Caco-2 (cell line): ENCODE measurements at regions of chr2 and their contacts with region 1.

Region 1: DNA sequence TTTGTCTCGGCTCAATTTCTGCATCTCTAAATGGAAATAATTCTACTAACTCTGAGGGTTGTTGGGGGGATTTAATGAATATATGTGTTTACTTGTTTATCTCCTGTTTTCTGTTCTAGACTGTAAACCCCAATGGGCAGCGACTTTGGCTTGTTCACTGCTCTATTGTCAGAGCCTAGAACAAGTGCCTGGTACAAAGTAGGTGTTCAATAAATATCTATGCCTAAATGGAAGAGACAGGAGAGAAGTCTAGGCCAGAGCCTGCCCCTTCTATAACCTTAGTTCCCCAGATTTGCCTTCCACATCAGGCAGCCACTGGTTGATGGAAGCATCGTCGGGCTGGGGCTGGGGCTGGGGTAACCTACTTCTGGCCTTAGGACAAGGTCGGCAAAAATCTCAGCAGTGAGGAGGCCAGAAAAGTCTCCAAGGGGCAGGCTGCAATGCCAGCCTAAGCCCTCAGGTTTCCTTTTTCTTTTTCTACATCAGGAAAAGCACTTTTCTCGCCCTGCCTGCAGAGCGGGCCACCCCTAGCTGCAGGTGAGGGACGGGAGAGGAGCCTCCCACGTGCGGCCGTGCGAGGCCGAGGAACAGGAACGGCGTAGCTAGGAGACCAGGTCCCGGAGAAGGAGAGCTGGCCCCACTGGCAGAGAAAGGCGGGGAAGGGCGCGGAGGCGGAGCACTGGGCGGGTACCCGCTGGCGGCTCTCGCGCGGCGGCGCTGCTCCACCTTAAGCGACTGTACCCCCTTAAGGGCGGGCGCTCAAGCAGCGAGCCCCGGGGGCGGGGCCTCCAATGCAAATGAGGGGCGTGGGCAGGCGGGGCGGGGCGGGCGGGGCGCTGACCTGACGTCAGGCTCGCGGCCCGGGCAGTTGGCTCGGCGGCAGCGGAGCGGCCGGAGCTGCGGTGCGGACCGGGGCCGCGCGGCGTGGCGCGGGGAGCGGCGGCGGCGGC is at the start of gene CNNM4:
- DNase-seq: peak; percentile 96
- H3K4me3 ChIP-seq: peak within 1 kb of the TSS; percentile 91
- H3K4me3 Mint-ChIP-seq: peak within 1 kb of the TSS; percentile 76
- H3K27ac Mint-ChIP-seq: peak within 1 kb of the TSS; percentile 77
- H3K4me1 ChIP-seq: peaks cover 33% of the 10 kb centered on the region
- H3K4me1 Mint-ChIP-seq: peaks cover 29% of the 10 kb centered on the region
- H3K27me3 ChIP-seq: no peaks in the 10 kb centered on the region
- H3K27me3 Mint-ChIP-seq: no peaks in the 10 kb centered on the region
- CTCF ChIP-seq: peak in 1 of 2 experiments; percentile 37
- total RNA-seq, gene CNNM4: 23.2 and 28.3 TPM in 2 replicates

Region 2: GRCh38 chr2:96638144-96639121 is 121.9 kb before region 1 on chr2 and contains the start of gene KANSL3:
- CTCF ChIA-PET with region 1: no interaction called
- POLR2A ChIA-PET with region 1: interaction called, 5 read pairs
- intact Hi-C with region 1: loop called (anchors 1 kb)
- DNase-seq: peak; percentile 88 to 96
- H3K4me3 ChIP-seq: peak within 1 kb of the TSS; percentile 69
- H3K4me3 Mint-ChIP-seq: peak within 1 kb of the TSS; percentile 81
- H3K27ac Mint-ChIP-seq: peak within 1 kb of the TSS; percentile 94
- H3K4me1 ChIP-seq: no peaks in the 10 kb centered on the region
- H3K4me1 Mint-ChIP-seq: peaks cover 12% of the 10 kb centered on the region
- H3K27me3 ChIP-seq: no peaks in the 10 kb centered on the region
- H3K27me3 Mint-ChIP-seq: no peaks in the 10 kb centered on the region
- CTCF ChIP-seq: no peak
- total RNA-seq, gene KANSL3: 47.4 and 48.6 TPM in 2 replicates

Region 3: DNA sequence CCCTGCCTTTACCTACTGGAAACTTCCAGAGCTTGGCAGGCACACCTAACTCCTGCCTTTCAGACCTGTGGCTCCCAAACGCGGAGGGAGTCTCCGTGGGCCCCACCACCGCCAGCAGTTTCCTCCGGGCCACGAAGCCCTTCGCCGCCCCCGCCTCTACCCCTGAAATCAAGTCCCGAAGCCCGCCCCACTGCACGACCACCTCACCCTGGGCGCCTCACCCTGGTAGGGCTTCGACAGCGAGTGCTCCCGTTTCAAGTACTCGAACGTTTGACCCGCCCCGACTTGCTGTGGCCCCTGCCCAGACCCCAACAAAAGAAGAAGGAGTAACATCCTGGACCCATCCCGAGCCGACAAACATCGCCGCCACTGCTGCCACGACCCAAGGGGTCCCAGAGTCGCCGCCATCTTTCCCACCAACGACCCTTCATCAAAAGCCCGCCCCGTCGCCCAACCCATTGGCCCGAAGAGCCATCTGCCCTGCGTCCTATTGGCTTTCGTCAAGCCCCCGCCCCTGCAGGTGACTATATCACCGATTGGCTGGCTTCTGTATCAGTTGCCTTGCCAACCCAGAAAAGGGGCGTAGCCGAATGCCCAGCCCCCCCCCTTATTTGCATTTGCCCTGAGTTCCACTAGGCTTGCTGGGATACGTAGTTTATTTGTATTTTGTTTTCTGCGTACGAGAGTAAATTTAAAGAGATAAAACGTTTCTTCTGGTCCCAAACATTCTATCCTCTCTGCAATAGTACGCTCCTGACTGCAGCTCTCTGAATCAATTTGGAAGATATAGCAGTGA is 20.5 kb before region 1 on chr2 and contains the start of gene LMAN2L:
- CTCF ChIA-PET with region 1: interaction called, 8 read pairs
- POLR2A ChIA-PET with region 1: interaction called, 3 read pairs
- intact Hi-C with region 1: loop called (anchors 1 kb)
- DNase-seq: peak; percentile 97 to 98
- H3K4me3 ChIP-seq: peak within 1 kb of the TSS; percentile 81
- H3K4me3 Mint-ChIP-seq: peak within 1 kb of the TSS; percentile 85
- H3K27ac Mint-ChIP-seq: peak within 1 kb of the TSS; percentile 99
- H3K4me1 ChIP-seq: peaks cover 6% of the 10 kb centered on the region
- H3K4me1 Mint-ChIP-seq: peaks cover 15% of the 10 kb centered on the region
- H3K27me3 ChIP-seq: no peaks in the 10 kb centered on the region
- H3K27me3 Mint-ChIP-seq: no peaks in the 10 kb centered on the region
- CTCF ChIP-seq: peak in 1 of 2 experiments; percentile 5
- total RNA-seq, gene LMAN2L: 27.4 and 30.2 TPM in 2 replicates

Region 4: GRCh38 chr2:96788442-96789244 is 28.3 kb after region 1 on chr2:
- CTCF ChIA-PET with region 1: interaction called, 8 read pairs
- POLR2A ChIA-PET with region 1: interaction called, 3 read pairs
- intact Hi-C with region 1: loop called (anchors 1 kb)
- DNase-seq: peak; percentile 47 to 77
- H3K4me3 ChIP-seq: no peak overlapping the region
- H3K4me3 Mint-ChIP-seq: peak overlapping the region; percentile 32
- H3K27ac Mint-ChIP-seq: peak overlapping the region; percentile 92
- H3K4me1 ChIP-seq: peaks cover 23% of the 10 kb centered on the region
- H3K4me1 Mint-ChIP-seq: peaks cover 14% of the 10 kb centered on the region
- H3K27me3 ChIP-seq: no peaks in the 10 kb centered on the region
- H3K27me3 Mint-ChIP-seq: no peaks in the 10 kb centered on the region
- CTCF ChIP-seq: peak in 1 of 2 experiments; percentile 3

Region 5: GRCh38 chr2:96816128-96816835 is 56.0 kb after region 1 on chr2 and contains the start of gene CNNM3:
- CTCF ChIA-PET with region 1: interaction called, 10 read pairs
- POLR2A ChIA-PET with region 1: interaction called, 5 read pairs
- intact Hi-C with region 1: loop called (anchors 2 kb)
- DNase-seq: peak; percentile 97 to 99
- H3K4me3 ChIP-seq: peak within 1 kb of the TSS; percentile 96
- H3K4me3 Mint-ChIP-seq: peak within 1 kb of the TSS; percentile 84
- H3K27ac Mint-ChIP-seq: peak within 1 kb of the TSS; percentile 42
- H3K4me1 ChIP-seq: peaks cover 32% of the 10 kb centered on the region
- H3K4me1 Mint-ChIP-seq: peaks cover 42% of the 10 kb centered on the region
- H3K27me3 ChIP-seq: no peaks in the 10 kb centered on the region
- H3K27me3 Mint-ChIP-seq: no peaks in the 10 kb centered on the region
- CTCF ChIP-seq: peak; percentile 60 to 72
- total RNA-seq, gene CNNM3: 62.5 and 69.1 TPM in 2 replicates